OCI-LY7 (cell line): ENCODE measurements at regions of chr11 and their contacts with region 1.

Region 1: DNA sequence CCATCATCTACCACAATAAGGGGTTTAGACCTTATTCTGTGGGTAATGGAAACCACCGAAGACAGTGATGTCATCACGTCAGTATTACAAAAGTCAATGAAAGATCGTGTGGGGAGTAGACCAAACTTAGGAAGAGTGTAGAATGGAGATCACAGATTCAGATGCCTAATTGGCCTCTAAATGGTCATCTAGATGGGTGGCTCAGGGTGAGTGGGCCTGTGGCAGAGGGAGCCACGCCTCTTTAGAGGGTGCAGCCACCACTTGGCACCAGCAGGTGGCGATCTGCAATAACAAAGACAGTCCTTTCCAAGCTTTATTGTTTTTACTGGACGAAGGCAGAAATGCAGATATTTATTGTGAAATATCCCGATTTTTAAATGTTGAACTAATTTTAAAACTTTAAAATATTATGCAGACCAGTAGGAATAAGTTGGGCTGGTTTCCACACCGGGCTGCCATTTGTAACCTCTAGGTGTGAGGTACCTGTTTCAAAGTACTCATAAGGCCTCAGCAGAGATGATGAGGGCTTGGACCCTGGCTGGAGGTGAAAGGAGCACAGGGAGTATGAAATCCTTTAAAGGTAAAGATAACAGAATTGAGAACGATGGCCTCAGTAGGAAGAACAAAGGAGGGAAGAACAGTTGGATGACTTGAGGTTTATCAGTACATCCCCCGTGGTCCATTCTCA is 222.0 kb downstream of the DBX1 start:
- DNase-seq: peak; percentile 42
- H3K4me3 ChIP-seq: no peak overlapping the region
- H3K27ac ChIP-seq: no peak overlapping the region
- H3K4me1 ChIP-seq: no peaks in the 10 kb centered on the region
- CTCF ChIP-seq: peak; percentile 91

Region 2: GRCh38 chr11:20355221-20356219 is 417.2 kb after region 1 on chr11:
- CTCF ChIA-PET with region 1: no interaction called
- POLR2A ChIA-PET with region 1: interaction called, 3 read pairs
- intact Hi-C with region 1: loop called (anchors 10 kb)
- DNase-seq: peak; percentile 35
- H3K4me3 ChIP-seq: no peak overlapping the region
- H3K27ac ChIP-seq: no peak overlapping the region
- H3K4me1 ChIP-seq: no peaks in the 10 kb centered on the region
- CTCF ChIP-seq: peak; percentile 74